Breast epithelium (tissue), 4 donors: ENCODE measurements at regions of chr3 and their contacts with region 1.

Region 1: DNA sequence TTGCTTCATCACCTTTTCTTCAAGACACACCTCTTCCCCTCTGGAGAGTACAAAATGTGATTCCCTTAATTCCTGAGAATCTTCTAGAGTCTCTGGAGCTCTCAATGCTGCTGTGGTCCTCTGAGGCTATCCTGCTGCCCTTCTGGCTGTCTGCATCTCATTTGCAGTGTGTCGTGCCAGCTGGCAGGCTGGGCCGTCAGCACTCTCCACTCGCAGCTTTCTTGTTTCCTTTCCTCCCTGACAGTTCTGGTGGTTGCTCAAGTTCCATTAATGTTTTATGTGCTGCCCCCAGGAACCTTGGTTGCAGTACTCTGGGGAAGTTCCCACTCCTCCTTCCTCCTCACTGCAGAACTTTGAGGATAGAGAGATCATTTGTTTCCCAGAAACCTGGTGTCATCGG is 210.8 kb upstream of the ROPN1 start:
- DNase-seq: no peak
- H3K4me3 ChIP-seq: no peak overlapping the region
- H3K27ac ChIP-seq: no peak overlapping the region
- H3K4me1 ChIP-seq: no peaks in the 10 kb centered on the region
- H3K27me3 ChIP-seq: no peaks in the 10 kb centered on the region
- CTCF ChIP-seq: no peak
- POLR2A ChIP-seq: no peak

Region 2: GRCh38 chr3:122890077-122890719 is 1312.6 kb before region 1 on chr3:
- intact Hi-C with region 1: no loop called
- DNase-seq: peak in 1 of 2 donors; percentile 67
- H3K4me3 ChIP-seq: no peak overlapping the region
- H3K27ac ChIP-seq: no peak overlapping the region
- H3K4me1 ChIP-seq: no peaks in the 10 kb centered on the region
- H3K27me3 ChIP-seq: no peaks in the 10 kb centered on the region
- CTCF ChIP-seq: no peak
- POLR2A ChIP-seq: no peak

Region 3: GRCh38 chr3:123412811-123413604 is 789.7 kb before region 1 on chr3:
- intact Hi-C with region 1: loop called (anchors 5 kb)
- DNase-seq: no peak
- H3K4me3 ChIP-seq: peak overlapping the region in 2 of 3 donors; percentile 21 to 54
- H3K27ac ChIP-seq: peak overlapping the region; percentile 45 to 68
- H3K4me1 ChIP-seq: no peaks in the 10 kb centered on the region
- H3K27me3 ChIP-seq: no peaks in the 10 kb centered on the region
- CTCF ChIP-seq: no peak
- POLR2A ChIP-seq: no peak

Region 4: DNA sequence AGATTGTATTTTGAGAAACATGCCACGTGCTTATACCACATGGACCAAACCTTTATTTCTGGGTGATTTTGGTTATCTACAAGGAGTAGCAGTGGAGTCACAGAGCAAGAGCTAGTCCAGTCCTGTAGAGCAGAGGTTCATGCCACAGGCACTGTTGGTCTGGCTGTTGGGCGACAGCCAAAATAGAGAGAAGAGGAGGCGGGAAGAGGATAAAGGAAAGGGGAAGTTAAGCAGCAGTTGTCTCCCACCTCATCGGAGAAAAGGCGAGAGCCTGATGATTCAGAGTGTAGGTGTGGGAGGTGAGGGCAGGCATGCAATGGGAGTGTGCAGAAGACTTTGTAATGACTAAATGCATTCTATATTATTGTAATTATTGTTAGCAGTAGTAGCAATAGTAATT is 26.7 kb after region 1 on chr3:
- intact Hi-C with region 1: loop called (anchors 1 kb)
- DNase-seq: no peak
- H3K4me3 ChIP-seq: no peak overlapping the region
- H3K27ac ChIP-seq: no peak overlapping the region
- H3K4me1 ChIP-seq: no peaks in the 10 kb centered on the region
- H3K27me3 ChIP-seq: no peaks in the 10 kb centered on the region
- CTCF ChIP-seq: no peak
- POLR2A ChIP-seq: no peak

Region 5: DNA sequence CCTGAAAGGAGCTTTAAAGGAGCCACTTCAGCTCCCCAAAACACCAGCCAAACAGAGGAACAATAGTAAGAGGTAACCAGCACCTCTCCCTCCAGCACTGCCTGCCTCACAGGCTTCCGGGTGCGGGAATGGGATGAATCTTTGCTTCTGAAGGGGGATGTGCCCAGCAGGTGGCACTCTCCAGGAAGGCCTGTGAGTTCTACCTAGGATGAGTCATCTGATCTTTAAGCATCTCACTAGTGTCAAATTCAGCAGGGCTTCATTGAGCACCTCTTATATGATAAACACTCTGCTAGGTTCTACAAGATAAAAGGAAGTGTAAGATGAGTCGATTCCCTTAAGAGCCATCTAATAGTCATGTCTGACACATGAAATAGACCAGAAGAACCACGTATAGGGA is 290.1 kb after region 1 on chr3:
- intact Hi-C with region 1: no loop called
- DNase-seq: peak; percentile 69 to 76
- H3K4me3 ChIP-seq: no peak overlapping the region
- H3K27ac ChIP-seq: no peak overlapping the region
- H3K4me1 ChIP-seq: no peaks in the 10 kb centered on the region
- H3K27me3 ChIP-seq: no peaks in the 10 kb centered on the region
- CTCF ChIP-seq: peak in 2 of 3 donors; percentile 37 to 58
- POLR2A ChIP-seq: no peak